ENCODE measurements at regions of chr12 and their contacts with region 1.

Region 1: DNA sequence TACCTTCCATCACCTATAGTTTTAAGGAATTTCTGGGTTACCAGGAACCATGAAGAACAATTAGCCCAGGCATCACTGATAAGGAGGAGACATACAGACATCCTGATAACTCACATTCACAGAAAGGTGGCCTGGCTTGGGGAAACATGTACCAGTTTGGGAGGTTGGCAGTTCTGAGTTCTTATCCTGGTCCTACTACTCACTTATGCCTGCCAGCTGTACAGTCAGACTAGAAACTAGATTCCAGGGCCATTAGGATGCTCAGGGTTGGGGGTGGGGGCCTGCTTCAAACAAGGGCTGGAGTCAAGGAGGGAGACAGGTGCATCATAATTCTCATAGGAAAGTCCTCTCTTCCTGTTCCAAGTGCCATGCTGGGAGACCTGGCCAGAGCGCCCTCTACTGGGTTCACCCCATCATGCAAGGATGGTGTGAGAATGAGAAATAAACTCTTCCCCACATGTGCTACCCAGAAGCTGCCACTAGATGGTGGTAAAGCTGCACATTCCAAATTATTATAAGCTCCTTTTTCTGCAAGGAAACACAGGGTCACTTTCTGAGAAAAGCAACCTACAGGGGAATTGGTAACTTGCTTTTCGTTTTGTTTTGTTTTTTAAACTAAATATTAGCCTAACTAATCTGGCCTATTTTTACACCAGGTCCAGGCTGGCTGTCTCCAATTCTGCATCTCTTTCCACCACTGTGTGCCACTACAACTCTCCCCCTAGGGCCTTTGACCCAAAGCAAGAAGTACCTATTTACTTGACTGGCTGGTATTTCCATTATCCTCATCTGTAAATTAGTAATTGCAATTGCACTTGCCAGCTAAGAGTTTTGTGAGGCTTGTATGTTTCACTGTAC is 14.5 kb downstream of the OAS2 start:
- DNase-seq: peak; percentile 67
- CTCF ChIP-seq: peak; percentile 73

Region 2: DNA sequence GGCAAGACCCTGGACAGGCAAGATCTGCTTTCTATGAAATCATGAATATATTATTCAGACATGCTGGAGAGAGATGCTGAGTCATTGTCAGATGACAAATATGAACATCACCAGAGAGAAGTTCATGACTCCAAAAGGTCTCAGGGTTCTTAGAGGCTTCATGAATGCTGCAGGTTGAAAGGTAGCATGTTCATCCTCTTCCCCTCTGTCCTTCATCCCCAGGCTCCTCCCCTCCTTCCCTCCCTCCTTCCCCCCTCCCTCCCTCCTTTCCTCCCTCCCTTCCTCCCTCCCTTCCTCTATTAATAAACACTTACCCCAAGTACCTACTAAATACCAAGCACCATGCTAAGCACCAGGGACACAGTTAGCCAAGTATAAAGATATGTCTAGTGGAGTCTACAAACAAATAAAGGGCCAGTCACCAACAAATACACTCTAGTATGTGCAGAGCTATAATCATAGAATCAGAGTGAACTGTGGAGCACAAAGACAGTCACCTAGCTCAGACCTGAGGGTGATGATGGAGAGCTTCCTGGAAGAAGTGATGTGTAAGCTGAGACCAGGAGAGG is 155.1 kb before region 1 on chr12:
- CTCF ChIA-PET with region 1: no interaction called
- POLR2A ChIA-PET with region 1: no interaction called
- DNase-seq: no peak
- CTCF ChIP-seq: no peak

Region 3: GRCh38 chr12:112906712-112907414 is 85.9 kb before region 1 on chr12 and contains the start of gene OAS1:
- CTCF ChIA-PET with region 1: interaction called, 12 read pairs
- POLR2A ChIA-PET with region 1: no interaction called
- DNase-seq: peak; percentile 76
- CTCF ChIP-seq: no peak

Region 4: GRCh38 chr12:112978163-112979040 is 14.4 kb before region 1 on chr12 and contains the start of gene OAS2:
- CTCF ChIA-PET with region 1: interaction called, 37 read pairs
- POLR2A ChIA-PET with region 1: interaction called, 3 read pairs
- DNase-seq: peak; percentile 89
- CTCF ChIP-seq: no peak

Region 5: DNA sequence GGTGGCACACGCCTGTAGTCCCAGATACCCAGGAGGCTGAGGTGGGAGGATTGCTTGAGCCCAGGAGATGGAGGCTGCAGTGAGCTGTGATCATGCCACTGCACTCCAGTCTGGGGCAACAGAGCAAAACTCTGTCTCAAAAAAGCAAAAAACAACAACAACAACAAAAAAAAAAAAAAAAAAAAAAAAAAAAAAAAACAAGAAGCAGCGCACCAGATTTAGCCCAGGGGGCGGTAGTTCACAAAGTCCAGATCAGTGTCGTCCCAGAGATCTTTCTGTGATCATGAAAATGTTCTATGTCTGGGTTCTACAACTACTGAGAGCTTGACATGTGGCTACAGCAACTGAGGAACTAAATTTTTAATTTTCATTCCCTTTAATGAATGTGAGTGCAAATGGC is 13.0 kb after region 1 on chr12:
- CTCF ChIA-PET with region 1: interaction called, 25 read pairs
- POLR2A ChIA-PET with region 1: no interaction called
- DNase-seq: no peak
- CTCF ChIP-seq: no peak

Region 6: GRCh38 chr12:113030875-113031525 is 38.2 kb after region 1 on chr12:
- CTCF ChIA-PET with region 1: interaction called, 15 read pairs
- POLR2A ChIA-PET with region 1: no interaction called
- DNase-seq: peak; percentile 59
- CTCF ChIP-seq: peak; percentile 65